HEK293 (cell line): ENCODE measurements at regions of chr17 and their contacts with region 1.

Region 1: GRCh38 chr17:42101513-42102319 is 3.4 kb upstream of the ZNF385C start:
- H3K4me3 ChIP-seq: no peak overlapping the region
- H3K27ac ChIP-seq: no peak overlapping the region
- H3K4me1 ChIP-seq: no peaks in the 10 kb centered on the region; the same call in 1 of the 2 replicates
- CTCF ChIP-seq: peak; percentile 69

Region 2: DNA sequence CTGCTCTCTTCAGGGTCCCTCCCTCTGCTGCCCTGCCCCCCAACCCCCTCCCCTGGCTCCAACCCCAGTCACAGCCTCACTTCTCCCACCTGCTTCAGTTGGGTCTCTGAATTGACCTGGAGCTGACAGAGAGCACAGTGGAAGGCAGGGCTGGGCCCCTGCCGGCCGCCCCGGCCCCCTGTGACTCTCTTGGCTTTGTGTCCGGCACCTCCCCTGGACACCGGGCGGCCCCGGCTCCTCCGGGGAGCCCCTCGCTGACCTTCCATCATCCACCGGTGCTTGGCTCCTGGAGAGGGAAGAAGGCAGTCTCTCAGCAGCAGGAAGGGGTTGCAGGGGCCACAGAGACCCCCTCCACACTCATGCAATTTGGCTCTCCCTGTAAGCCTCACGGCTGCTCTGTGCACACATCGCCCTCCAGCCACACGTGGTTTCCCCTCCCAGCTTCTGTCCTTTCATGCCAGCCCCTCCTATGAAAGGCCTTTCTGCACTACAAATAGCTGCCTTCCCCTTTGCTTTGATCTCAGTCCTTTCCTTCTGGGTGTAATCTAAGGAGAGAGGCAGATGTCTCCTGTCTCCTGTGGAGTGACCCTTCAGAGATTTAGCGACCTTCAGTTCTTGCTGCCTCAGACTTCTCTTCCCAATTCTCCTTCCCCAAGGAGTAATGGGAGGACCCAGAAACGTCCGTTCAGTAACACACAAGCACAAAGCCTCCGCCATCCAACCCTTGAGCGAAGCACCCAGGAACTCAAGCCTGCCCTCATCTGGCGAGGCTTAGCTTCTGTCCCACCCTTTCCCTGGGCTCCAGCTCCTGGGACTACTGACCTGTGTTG is 73.5 kb before region 1 on chr17:
- CTCF ChIA-PET with region 1: interaction called, 260 read pairs
- POLR2A ChIA-PET with region 1: interaction called, 8 read pairs
- H3K4me3 ChIP-seq: no peak overlapping the region
- H3K27ac ChIP-seq: no peak overlapping the region
- H3K4me1 ChIP-seq: no peaks in the 10 kb centered on the region
- CTCF ChIP-seq: no peak; the same call in 1 of the 2 replicates

Region 3: DNA sequence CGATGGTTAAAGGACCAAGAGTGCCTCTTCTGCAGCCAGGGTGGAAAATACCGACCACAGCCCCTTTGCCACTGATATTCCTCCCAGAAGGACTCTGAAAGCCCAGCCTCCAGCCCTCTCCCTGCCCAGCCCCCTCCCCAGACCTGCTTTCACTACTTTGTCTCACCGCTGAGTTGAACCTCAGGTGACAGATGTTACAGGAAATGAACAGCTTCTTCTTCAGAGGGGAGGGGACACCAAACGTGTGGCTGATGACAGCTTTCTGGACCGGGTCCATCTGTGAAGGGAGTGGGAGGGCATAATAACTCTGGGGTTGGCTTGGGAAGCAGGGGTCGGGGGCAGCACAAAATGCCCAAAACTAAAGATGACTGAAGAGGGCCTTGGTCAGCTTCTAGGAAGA is 67.7 kb before region 1 on chr17:
- CTCF ChIA-PET with region 1: interaction called, 85 read pairs
- POLR2A ChIA-PET with region 1: no interaction called
- H3K4me3 ChIP-seq: no peak overlapping the region
- H3K27ac ChIP-seq: no peak overlapping the region
- H3K4me1 ChIP-seq: no peaks in the 10 kb centered on the region
- CTCF ChIP-seq: no peak

Region 4: DNA sequence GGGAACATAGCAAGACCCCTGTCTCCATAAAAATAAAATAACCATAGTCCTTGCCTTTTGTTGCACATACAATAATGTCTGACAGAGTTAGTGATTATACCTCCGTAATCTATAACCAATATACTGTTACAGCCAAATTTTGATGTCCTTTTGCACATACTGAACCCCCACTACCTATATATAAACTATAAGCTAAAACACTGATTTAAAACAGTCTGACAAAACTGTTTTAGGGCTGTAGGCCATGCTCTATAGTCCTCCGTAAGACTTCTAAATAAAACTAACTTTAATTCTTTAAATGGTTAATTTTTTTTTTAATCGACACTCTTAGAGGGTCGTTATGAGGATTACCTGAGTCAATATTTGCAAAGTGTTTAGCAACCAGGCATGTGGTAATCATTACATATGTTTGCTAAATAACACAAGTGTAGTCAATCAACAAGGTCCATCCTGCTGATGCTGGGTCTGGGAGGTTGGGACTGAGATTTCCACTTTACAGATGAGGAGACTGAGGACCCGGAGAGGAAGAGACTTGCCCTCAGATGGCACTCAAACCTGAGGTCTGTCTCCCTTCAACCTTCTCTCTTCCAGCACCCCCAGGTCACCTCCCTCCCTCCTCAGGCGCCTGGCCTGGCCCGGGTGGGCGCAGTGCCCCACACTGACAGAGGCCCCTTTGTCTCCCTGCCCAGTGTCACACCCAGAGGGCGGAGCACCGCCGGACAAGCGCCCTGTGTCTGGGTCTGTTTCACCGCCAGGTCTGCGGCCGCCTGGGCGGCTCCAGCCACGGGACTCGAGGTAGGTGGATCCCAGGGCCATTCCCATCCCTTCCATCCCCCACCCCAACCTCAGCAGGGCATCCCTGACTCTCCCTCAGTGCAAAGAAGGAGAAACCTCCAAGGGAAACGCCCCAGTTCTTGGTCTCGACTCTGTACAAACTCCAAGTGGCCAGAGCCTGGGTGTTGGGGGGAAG is 13.7 kb before region 1 on chr17:
- CTCF ChIA-PET with region 1: interaction called, 30 read pairs
- POLR2A ChIA-PET with region 1: no interaction called
- H3K4me3 ChIP-seq: no peak overlapping the region
- H3K27ac ChIP-seq: no peak overlapping the region
- H3K4me1 ChIP-seq: peaks cover 5% of the 10 kb centered on the region
- CTCF ChIP-seq: no peak

Region 5: GRCh38 chr17:42112552-42113176 is 10.9 kb after region 1 on chr17 and contains the start of gene DHX58:
- CTCF ChIA-PET with region 1: interaction called, 20 read pairs
- POLR2A ChIA-PET with region 1: interaction called, 4 read pairs
- H3K4me3 ChIP-seq: no peak within 1 kb of the TSS
- H3K27ac ChIP-seq: no peak within 1 kb of the TSS
- H3K4me1 ChIP-seq: peaks cover 4% of the 10 kb centered on the region; the same call in 1 of the 2 replicates
- CTCF ChIP-seq: no peak

Region 6: GRCh38 chr17:42142371-42142896 is 40.7 kb after region 1 on chr17:
- CTCF ChIA-PET with region 1: no interaction called
- POLR2A ChIA-PET with region 1: no interaction called
- H3K4me3 ChIP-seq: no peak overlapping the region
- H3K27ac ChIP-seq: peak overlapping the region; percentile 58; the same call in 1 of the 2 replicates
- H3K4me1 ChIP-seq: peaks cover 9% of the 10 kb centered on the region
- CTCF ChIP-seq: no peak

Region 7: GRCh38 chr17:42399948-42400843 is 298.5 kb after region 1 on chr17:
- CTCF ChIA-PET with region 1: no interaction called
- POLR2A ChIA-PET with region 1: no interaction called
- H3K4me3 ChIP-seq: no peak overlapping the region
- H3K27ac ChIP-seq: no peak overlapping the region
- H3K4me1 ChIP-seq: no peaks in the 10 kb centered on the region
- CTCF ChIP-seq: no peak